ENCODE measurements at regions of chr16 and their contacts with region 1.

Region 1: GRCh38 chr16:19886073-19886941 is 1.7 kb upstream of the GPRC5B start:
- DNase-seq: peak; percentile 84
- H3K4me3 ChIP-seq: peak overlapping the region in 1 of 3 experiments; percentile 8
- H3K27ac ChIP-seq: no peak overlapping the region
- H3K4me1 ChIP-seq: peaks cover 21% of the 10 kb centered on the region
- H3K27me3 ChIP-seq: peaks cover 1 to 12% of the 10 kb centered on the region in 2 experiments
- CTCF ChIP-seq: peak; percentile 99
- POLR2A ChIP-seq: no peak

Region 2: GRCh38 chr16:19389246-19389645 is 497.1 kb before region 1 on chr16:
- CTCF ChIA-PET with region 1: no interaction called
- POLR2A ChIA-PET with region 1: no interaction called
- dilution Hi-C with region 1: no loop called
- intact Hi-C with region 1: loop called (anchors 1 kb)
- DNase-seq: peak; percentile 19
- H3K4me3 ChIP-seq: no peak overlapping the region
- H3K27ac ChIP-seq: no peak overlapping the region
- H3K4me1 ChIP-seq: no peaks in the 10 kb centered on the region
- H3K27me3 ChIP-seq: no peaks in the 10 kb centered on the region
- CTCF ChIP-seq: peak; percentile 24 to 42
- POLR2A ChIP-seq: no peak

Region 3: DNA sequence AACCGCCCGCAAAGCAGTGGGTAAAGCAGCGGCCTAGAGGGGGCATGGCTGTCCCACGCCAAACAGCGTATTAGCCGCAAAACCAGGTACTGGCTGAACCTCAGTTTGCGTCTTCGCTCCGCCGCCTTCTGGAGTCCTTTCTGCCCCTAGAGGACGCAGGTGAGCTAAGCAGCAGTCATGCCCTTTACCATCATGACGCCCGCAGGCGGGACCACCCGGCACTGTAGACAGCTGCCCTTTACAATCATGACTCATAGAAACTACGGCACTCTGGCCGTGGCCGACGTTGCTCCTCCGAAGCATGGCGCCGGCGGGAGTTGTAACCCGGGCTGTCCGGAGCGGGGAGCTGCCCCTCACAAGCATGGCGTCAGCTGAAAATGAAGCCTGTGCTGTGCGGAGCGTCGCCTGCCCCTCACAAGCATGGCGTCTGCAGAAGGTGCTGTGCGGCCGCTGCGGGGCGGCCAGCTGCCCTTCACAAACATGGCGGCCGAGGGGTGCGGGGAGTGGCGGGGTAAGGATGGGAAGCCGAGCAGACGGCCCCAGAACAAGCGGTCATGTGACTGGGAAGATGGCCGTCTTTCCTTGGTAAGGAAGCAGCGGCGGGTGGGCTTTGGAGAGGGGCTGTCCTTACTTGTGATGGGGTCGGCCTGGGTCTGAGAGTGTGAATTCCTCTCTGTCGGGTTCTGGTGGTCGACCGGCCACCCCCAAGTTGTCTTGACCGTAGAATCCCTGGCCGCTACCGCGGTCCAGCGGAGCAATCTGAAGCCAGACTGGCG is 331.0 kb before region 1 on chr16 and contains the start of gene VPS35L:
- CTCF ChIA-PET with region 1: interaction called, 8 read pairs
- POLR2A ChIA-PET with region 1: no interaction called
- dilution Hi-C with region 1: no loop called
- intact Hi-C with region 1: loop called (anchors 1 kb)
- DNase-seq: peak; percentile 100
- H3K4me3 ChIP-seq: peak within 1 kb of the TSS; percentile 67 to 77 (median 68)
- H3K27ac ChIP-seq: peak within 1 kb of the TSS; percentile 85
- H3K4me1 ChIP-seq: peaks cover 6% of the 10 kb centered on the region
- H3K27me3 ChIP-seq: no peaks in the 10 kb centered on the region
- CTCF ChIP-seq: peak; percentile 60 to 88
- POLR2A ChIP-seq: peak; percentile 90
- total RNA-seq, gene VPS35L: 80.2 and 91.1 TPM in 2 replicates

Region 4: DNA sequence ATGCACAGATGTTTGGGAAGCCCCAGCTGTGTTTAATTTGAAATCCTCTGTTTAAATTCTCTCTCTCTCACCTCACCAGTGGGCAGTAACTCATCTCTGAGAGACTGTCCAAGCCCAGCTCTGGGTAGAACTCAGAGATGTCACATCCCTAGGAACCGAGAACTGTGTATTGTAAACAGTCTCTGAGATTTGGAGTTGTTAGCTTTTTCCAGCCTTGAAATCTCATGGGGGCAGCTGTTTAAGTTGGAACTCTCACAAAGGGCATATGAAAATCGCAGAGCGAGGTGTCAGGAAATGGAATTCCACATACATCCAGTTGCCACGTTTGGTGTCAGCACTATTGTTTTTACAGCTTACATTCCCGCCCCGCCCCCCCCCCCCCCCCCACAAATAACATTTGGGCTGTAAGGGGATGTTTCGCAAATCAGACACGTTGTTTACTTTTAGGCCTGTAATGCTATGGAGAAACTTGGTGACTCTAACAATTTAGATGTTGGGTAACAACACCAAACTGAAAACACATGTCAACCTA is 296.5 kb before region 1 on chr16:
- CTCF ChIA-PET with region 1: interaction called, 11 read pairs
- POLR2A ChIA-PET with region 1: interaction called, 7 read pairs
- dilution Hi-C with region 1: no loop called
- intact Hi-C with region 1: no loop called
- DNase-seq: peak; percentile 97
- H3K4me3 ChIP-seq: no peak overlapping the region
- H3K27ac ChIP-seq: peak overlapping the region; percentile 73
- H3K4me1 ChIP-seq: peaks cover 17% of the 10 kb centered on the region
- H3K27me3 ChIP-seq: no peaks in the 10 kb centered on the region
- CTCF ChIP-seq: no peak
- POLR2A ChIP-seq: no peak

Region 5: GRCh38 chr16:19607616-19608280 is 278.6 kb before region 1 on chr16:
- CTCF ChIA-PET with region 1: interaction called, 251 read pairs
- POLR2A ChIA-PET with region 1: no interaction called
- dilution Hi-C with region 1: no loop called
- intact Hi-C with region 1: no loop called
- DNase-seq: peak; percentile 41
- H3K4me3 ChIP-seq: no peak overlapping the region
- H3K27ac ChIP-seq: no peak overlapping the region
- H3K4me1 ChIP-seq: peaks cover 16% of the 10 kb centered on the region
- H3K27me3 ChIP-seq: no peaks in the 10 kb centered on the region
- CTCF ChIP-seq: no peak
- POLR2A ChIP-seq: no peak

Region 6: DNA sequence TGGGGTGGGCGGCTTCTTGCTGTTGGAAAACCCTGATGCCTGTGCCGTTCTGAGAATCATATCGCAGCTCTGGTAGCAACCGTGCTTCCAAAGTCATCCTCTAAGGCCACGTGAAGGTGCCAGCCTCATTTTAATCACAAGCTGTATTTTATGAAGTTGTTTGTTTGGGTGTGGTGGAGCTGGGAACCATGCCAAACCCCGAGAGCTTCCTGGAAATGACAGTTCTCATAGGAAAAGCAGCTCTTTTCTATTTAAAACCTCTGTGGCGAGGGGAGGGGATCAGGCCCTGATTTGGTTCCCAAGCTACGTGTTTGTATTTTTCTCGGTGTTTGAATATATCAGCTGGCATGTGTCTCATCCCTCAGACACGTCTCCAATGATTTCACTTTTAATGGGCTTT is 190.0 kb before region 1 on chr16:
- CTCF ChIA-PET with region 1: interaction called, 7 read pairs
- POLR2A ChIA-PET with region 1: no interaction called
- dilution Hi-C with region 1: no loop called
- intact Hi-C with region 1: loop called (anchors 1 kb)
- DNase-seq: peak; percentile 94
- H3K4me3 ChIP-seq: no peak overlapping the region
- H3K27ac ChIP-seq: peak overlapping the region; percentile 59
- H3K4me1 ChIP-seq: peaks cover 17% of the 10 kb centered on the region
- H3K27me3 ChIP-seq: no peaks in the 10 kb centered on the region
- CTCF ChIP-seq: no peak
- POLR2A ChIP-seq: no peak

Region 7: GRCh38 chr16:19898924-19899604 is 12.8 kb after region 1 on chr16:
- CTCF ChIA-PET with region 1: interaction called, 11 read pairs
- POLR2A ChIA-PET with region 1: interaction called, 3 read pairs
- dilution Hi-C with region 1: no loop called
- intact Hi-C with region 1: no loop called
- DNase-seq: peak; percentile 55
- H3K4me3 ChIP-seq: no peak overlapping the region
- H3K27ac ChIP-seq: no peak overlapping the region
- H3K4me1 ChIP-seq: no peaks in the 10 kb centered on the region
- H3K27me3 ChIP-seq: no peaks in the 10 kb centered on the region
- CTCF ChIP-seq: peak; percentile 62 to 69
- POLR2A ChIP-seq: no peak